SK-N-SH (cell line): ENCODE measurements at regions of chr3 and their contacts with region 1.

Region 1: DNA sequence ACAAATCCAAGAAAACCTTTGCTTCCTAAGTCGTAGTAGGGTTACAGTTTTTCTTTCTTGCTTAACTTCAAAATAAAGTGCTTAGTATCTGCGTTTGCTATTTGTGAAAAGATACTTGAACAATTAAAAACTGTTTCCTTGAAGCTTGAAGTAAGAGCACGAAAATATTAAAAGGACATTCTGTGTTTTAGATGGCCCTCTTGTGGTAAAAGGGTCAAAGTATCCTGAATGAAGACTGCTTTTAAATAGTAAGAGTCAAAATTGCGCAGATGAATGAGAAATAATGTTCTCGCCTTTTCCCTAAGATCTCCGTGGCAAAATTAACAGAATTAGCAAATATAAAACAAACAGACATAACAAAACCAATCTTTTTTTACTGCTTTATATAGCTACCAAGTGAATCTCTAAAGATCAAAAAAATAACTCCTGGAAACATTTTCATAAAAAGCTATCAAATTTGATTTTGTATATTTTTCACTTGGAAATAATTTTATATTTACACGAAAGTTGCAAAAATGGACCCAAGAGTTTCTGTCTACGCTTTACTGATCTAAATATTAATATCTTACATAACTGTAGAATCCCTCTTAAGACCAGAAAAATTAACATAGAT is 175.4 kb downstream of the MBNL1 start:
- DNase-seq: peak; percentile 27
- H3K4me3 ChIP-seq: no peak overlapping the region; a peak in 1 of 4 replicates
- H3K27ac ChIP-seq: peak overlapping the region in 1 of 2 experiments; percentile 54; a peak in 2 of 4 replicates
- H3K4me1 ChIP-seq: peaks cover 0 to 19% of the 10 kb centered on the region in 2 experiments; a peak in 2 of 4 replicates
- H3K27me3 ChIP-seq: no peaks in the 10 kb centered on the region
- CTCF ChIP-seq: peak; percentile 81
- EP300 ChIP-seq: no peak
- RAD21 ChIP-seq: peak; percentile 91

Region 2: DNA sequence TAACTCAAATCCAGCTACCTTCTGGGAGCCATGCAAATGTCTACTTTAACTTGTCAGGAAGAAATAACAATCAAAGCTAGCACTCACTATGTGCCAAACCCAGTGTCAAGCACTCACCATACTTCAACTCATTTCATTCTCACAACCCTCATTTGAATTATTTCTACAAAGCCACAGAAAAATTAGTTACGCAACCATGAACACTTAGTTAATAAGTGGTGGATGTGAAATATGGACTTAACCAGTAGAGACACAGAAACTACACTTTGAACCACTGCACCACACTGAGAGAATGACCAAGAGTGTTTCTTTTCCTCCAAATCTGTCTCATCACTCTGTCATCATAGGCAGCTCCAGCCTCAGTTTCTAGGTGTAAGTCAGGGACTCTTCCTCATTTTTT is 266.4 kb before region 1 on chr3:
- CTCF ChIA-PET with region 1: interaction called, 143 read pairs
- POLR2A ChIA-PET with region 1: no interaction called
- DNase-seq: no peak
- H3K4me3 ChIP-seq: no peak overlapping the region
- H3K27ac ChIP-seq: no peak overlapping the region
- H3K4me1 ChIP-seq: peaks cover 0 to 7% of the 10 kb centered on the region in 2 experiments; a peak in 2 of 4 replicates
- H3K27me3 ChIP-seq: no peaks in the 10 kb centered on the region
- CTCF ChIP-seq: no peak
- EP300 ChIP-seq: no peak
- RAD21 ChIP-seq: no peak

Region 3: GRCh38 chr3:152190636-152191183 is 253.4 kb before region 1 on chr3:
- CTCF ChIA-PET with region 1: interaction called, 143 read pairs
- POLR2A ChIA-PET with region 1: no interaction called
- DNase-seq: no peak
- H3K4me3 ChIP-seq: no peak overlapping the region
- H3K27ac ChIP-seq: no peak overlapping the region
- H3K4me1 ChIP-seq: peaks cover 0 to 8% of the 10 kb centered on the region in 2 experiments; a peak in 3 of 4 replicates
- H3K27me3 ChIP-seq: no peaks in the 10 kb centered on the region
- CTCF ChIP-seq: no peak
- EP300 ChIP-seq: no peak
- RAD21 ChIP-seq: no peak

Region 4: GRCh38 chr3:152466784-152467183 is 22.6 kb after region 1 on chr3:
- CTCF ChIA-PET with region 1: interaction called, 12 read pairs
- POLR2A ChIA-PET with region 1: no interaction called
- DNase-seq: peak; percentile 32
- H3K4me3 ChIP-seq: no peak overlapping the region
- H3K27ac ChIP-seq: no peak overlapping the region
- H3K4me1 ChIP-seq: no peaks in the 10 kb centered on the region; a peak in 1 of 4 replicates
- H3K27me3 ChIP-seq: no peaks in the 10 kb centered on the region
- CTCF ChIP-seq: peak; percentile 62
- EP300 ChIP-seq: no peak
- RAD21 ChIP-seq: peak; percentile 42

Region 5: GRCh38 chr3:152885076-152885475 is 440.9 kb after region 1 on chr3:
- CTCF ChIA-PET with region 1: no interaction called
- POLR2A ChIA-PET with region 1: no interaction called
- DNase-seq: no peak
- H3K4me3 ChIP-seq: no peak overlapping the region
- H3K27ac ChIP-seq: no peak overlapping the region
- H3K4me1 ChIP-seq: no peaks in the 10 kb centered on the region
- H3K27me3 ChIP-seq: no peaks in the 10 kb centered on the region; the same call in 1 of the 2 replicates
- CTCF ChIP-seq: no peak
- EP300 ChIP-seq: no peak
- RAD21 ChIP-seq: no peak